ENCODE measurements at regions of chr15 and their contacts with region 1.

Region 1: DNA sequence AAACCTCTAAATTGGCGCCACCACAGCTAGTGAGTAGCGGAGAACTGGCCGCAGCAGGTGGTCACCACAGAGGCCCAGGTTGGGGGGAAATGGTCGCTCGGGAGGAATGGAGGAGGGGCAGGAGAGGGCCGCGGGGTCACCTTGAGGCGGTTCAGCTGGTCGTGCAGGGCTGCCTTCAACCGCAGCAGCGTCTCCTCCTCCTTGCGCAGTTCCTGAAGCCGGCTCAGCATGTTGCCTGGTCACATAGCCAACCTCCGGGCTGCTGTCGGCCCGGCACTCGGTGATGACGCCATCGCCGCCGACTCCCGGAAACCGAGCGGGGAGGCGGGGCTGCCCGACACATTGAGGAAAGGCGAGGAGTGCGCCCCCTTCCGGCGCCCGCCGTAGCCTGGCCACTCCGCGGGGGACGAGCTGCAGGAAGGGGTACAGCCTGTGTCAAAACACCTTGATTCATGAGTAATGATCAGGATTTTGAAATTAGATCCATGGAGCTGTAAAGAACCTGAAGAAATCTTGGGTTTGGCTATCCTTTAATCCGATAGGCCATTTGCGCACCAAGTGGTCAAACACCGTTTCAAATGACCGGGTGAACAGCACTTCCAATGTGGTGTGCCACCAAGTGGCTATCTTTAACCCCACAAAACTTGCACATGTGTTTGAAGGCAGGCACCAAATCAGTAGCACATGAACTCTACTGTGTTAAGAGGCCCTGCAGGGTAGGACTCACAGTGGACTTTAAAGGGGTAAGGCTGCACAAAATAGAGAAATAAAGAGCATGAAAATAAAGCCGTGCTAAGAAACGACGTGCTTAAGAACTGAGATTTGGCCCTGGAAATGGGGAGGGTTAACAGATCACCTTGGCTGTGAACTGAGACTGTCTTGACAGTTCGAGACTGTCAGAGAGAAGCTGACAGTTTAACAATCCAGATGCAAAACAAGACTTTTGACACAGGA is at the start of gene SNAPC5:
- DNase-seq: peak; percentile 89 to 95
- ATAC-seq: peak; percentile 95
- H3K4me3 ChIP-seq: peak within 1 kb of the TSS; percentile 72 to 96 (median 88)
- H3K27ac ChIP-seq: peak within 1 kb of the TSS; percentile 90 to 95 (median 92)
- H3K4me1 ChIP-seq: peaks cover 24 to 29% of the 10 kb centered on the region in 2 donors
- H3K27me3 ChIP-seq: no peaks in the 10 kb centered on the region
- CTCF ChIP-seq: peak; percentile 96 to 99 (median 98)
- POLR2A ChIP-seq: peak; percentile 63 to 75
- total RNA-seq, gene SNAPC5: 39.6 to 58.8 (median 50.8) TPM

Region 2: DNA sequence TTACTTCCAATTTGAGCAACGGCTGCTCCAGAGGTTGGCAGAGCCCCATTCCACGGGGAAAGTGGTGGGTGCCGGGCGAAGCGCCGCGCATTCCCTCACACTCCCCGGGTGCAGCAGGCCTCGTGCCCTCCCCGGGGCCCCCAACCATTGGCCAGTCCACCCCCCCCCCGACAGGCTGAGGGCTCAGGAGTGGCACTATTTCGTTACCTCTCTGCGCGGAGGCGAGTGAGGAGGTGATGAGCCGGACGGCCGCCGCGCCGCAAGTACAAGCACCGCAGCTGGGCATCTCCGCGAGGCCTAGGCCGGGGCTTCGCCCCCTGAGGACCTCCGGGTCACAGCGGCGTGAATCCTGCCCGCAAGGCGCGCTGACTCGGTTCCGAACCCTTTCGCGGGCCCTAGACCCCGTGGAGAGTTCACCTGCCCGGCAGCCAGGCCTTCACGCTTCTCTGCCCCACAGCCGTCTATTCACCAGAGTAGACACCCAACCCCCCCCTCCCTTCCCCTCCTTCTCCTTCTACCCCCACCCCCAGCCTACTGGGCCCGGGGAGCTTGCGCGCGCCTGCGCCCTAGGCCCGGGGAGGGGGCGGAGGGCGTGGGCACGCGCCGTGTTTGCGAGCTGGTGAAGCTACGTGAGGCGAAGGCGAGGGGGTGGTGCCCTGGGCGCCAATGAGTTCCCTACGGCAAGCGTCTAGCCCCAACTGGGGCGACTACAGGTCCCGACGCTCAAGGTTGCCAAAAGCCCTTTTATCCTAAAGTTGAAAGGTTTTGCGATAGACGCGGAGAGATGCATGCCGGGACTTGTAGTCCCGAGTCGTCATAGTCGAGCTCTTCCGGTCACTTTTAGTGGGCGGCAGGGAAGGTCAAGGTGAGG is 1312.7 kb before region 1 on chr15 and contains the start of gene CLPX:
- in situ Hi-C with region 1: no loop called
- intact Hi-C with region 1: loop called (anchors 10 kb)
- DNase-seq: peak; percentile 92 to 95
- ATAC-seq: peak; percentile 82 to 88
- H3K4me3 ChIP-seq: peak within 1 kb of the TSS; percentile 91 to 99 (median 96)
- H3K27ac ChIP-seq: peak within 1 kb of the TSS; percentile 97 to 99 (median 98)
- H3K4me1 ChIP-seq: peaks cover 19 to 35% of the 10 kb centered on the region in 2 donors
- H3K27me3 ChIP-seq: no peaks in the 10 kb centered on the region
- CTCF ChIP-seq: no peak
- POLR2A ChIP-seq: peak; percentile 84 to 91
- total RNA-seq, gene CLPX: 49.3 to 116 (median 63.3) TPM

Region 3: DNA sequence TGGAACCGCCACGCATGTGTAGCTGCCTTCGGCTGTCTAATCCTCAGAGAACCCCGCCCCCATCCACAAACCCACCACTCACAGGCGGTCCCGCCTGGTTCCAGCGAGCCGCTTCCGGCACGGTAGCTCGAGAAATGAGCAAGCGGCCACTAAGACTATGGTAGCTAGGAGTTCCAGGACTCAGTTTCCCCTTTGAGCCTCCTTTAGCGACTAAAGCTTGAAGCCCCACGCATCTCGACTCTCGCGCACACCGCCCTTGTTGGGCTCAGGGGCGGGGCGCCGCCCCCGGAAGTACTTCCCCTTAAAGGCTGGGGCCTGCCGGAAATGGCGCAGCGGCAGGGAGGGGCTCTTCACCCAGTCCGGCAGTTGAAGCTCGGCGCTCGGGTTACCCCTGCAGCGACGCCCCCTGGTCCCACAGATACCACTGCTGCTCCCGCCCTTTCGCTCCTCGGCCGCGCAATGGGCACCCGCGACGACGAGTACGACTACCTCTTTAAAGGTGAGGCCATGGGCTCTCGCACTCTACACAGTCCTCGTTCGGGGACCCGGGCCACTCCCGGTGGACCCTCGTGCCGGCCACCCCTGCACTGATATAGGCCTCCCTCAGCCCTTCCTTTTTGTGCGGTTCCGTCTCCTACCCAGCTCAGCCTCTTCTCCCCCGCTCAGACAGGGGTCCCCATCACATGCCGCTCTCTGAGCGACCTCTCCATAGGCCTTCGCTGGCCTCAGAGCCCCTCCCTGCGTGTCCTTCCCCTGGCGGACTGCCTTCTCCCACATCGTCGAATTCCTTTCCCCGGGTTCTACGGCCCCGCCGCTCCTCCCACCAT is 628.4 kb before region 1 on chr15 and contains the start of gene RAB11A:
- in situ Hi-C with region 1: no loop called
- intact Hi-C with region 1: loop called (anchors 10 kb)
- DNase-seq: peak; percentile 94 to 97
- ATAC-seq: peak; percentile 93 to 94
- H3K4me3 ChIP-seq: peak within 1 kb of the TSS; percentile 87 to 98 (median 88)
- H3K27ac ChIP-seq: peak within 1 kb of the TSS; percentile 92 to 100 (median 95)
- H3K4me1 ChIP-seq: peaks cover 17 to 23% of the 10 kb centered on the region in 2 donors
- H3K27me3 ChIP-seq: no peaks in the 10 kb centered on the region
- CTCF ChIP-seq: peak in 4 of 5 experiments; percentile 25 to 55 (median 40)
- POLR2A ChIP-seq: peak; percentile 95 to 98
- total RNA-seq, gene RAB11A: 93.0 to 207 (median 166) TPM

Region 4: GRCh38 chr15:66293419-66294156 is 204.2 kb before region 1 on chr15 and contains the start of gene DIS3L:
- in situ Hi-C with region 1: no loop called
- intact Hi-C with region 1: loop called (anchors 5 kb)
- DNase-seq: peak; percentile 5 to 25
- ATAC-seq: peak; percentile 83 to 88
- H3K4me3 ChIP-seq: peak within 1 kb of the TSS; percentile 69 to 74 (median 71)
- H3K27ac ChIP-seq: peak within 1 kb of the TSS; percentile 78 to 88 (median 85)
- H3K4me1 ChIP-seq: peaks cover 26 to 31% of the 10 kb centered on the region in 2 donors
- H3K27me3 ChIP-seq: no peaks in the 10 kb centered on the region
- CTCF ChIP-seq: peak in 1 of 5 experiments; percentile 16
- POLR2A ChIP-seq: peak; percentile 3 to 11
- total RNA-seq, gene DIS3L: 21.9 to 35.1 (median 32.1) TPM

Region 5: GRCh38 chr15:66356345-66357236 is 141.2 kb before region 1 on chr15 and contains the start of gene TIPIN:
- in situ Hi-C with region 1: no loop called
- intact Hi-C with region 1: loop called (anchors 10 kb)
- DNase-seq: peak; percentile 83 to 90
- ATAC-seq: peak; percentile 95 to 98
- H3K4me3 ChIP-seq: peak within 1 kb of the TSS; percentile 71 to 82 (median 77)
- H3K27ac ChIP-seq: peak within 1 kb of the TSS; percentile 76 to 80 (median 79)
- H3K4me1 ChIP-seq: peaks cover 0 to 5% of the 10 kb centered on the region in 2 donors
- H3K27me3 ChIP-seq: no peaks in the 10 kb centered on the region
- CTCF ChIP-seq: no peak
- POLR2A ChIP-seq: peak in 1 of 2 donors; percentile 11
- total RNA-seq, gene TIPIN: 0.66 to 6.0 (median 3.6) TPM

Region 6: GRCh38 chr15:66386204-66387123 is 111.3 kb before region 1 on chr15 and contains the start of gene MAP2K1:
- in situ Hi-C with region 1: loop called in 3 of 4 experiments (anchors 5 to 10 kb)
- intact Hi-C with region 1: loop called (anchors 1 kb)
- DNase-seq: peak; percentile 98
- ATAC-seq: peak; percentile 92 to 96
- H3K4me3 ChIP-seq: peak within 1 kb of the TSS; percentile 80 to 88 (median 84)
- H3K27ac ChIP-seq: peak within 1 kb of the TSS; percentile 91 to 96 (median 94)
- H3K4me1 ChIP-seq: peaks cover 34 to 40% of the 10 kb centered on the region in 2 donors
- H3K27me3 ChIP-seq: no peaks in the 10 kb centered on the region
- CTCF ChIP-seq: peak; percentile 49 to 77 (median 60)
- POLR2A ChIP-seq: peak; percentile 83 to 85
- total RNA-seq, gene MAP2K1: 50.4 to 112 (median 69.5) TPM

Measured in gastrocnemius medialis (tissue), 4 donors.